CD8-positive, alpha-beta memory T cell (primary cell): ENCODE measurements at regions of chr20 and their contacts with region 1.

Region 1: DNA sequence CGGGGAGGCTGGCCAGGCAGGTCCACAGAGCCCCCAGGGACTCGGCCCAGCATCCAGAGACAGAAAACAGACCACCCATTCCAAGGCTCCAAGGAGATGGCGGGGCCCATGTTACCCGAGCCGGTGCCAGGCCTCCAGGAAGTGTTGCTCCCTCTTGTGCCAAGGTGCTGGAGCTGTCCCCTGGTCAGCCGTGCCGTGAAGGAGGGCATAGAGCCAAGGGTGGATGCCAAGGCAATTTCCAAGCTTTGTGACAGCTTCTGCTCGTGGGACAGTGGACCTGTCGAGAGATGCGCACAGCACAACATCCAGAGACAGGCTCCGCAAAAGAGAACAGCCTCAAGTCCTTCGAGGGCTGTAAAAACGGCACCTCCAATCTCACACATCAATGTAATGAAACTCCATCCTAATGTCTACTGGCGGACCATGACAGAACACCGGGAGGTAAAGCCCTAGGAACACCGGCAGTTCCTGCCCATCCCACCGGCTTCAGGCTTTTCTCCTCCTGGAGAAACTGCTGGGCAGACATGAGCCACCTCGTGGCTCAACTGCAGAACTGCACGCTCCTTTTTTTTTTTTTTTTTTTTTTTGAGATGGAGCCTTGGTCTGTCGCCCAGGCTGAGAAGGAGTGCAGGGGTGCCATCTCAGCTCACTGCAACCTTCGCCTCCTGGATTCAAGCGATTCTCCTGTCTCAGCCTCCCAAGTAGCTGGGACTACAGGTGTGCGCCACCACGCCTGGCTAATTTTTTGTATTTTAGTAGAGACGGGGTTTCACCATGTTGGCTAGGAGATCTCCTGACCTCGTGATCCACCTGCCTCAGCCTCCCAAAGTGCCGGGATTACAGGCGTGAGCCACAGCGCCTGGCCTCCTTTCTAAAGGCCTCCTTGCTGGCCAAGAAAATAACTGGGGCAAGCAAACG is 30.9 kb upstream of the AVP start:
- DNase-seq: peak in 2 of 5 donors; percentile 21 to 49
- H3K4me3 ChIP-seq: no peak overlapping the region
- H3K4me3 Mint-ChIP-seq: no peak overlapping the region
- H3K27ac ChIP-seq: no peak overlapping the region
- H3K27ac Mint-ChIP-seq: peak overlapping the region in 1 of 8 donors; percentile 94
- H3K4me1 ChIP-seq: no peaks in the 10 kb centered on the region
- H3K4me1 Mint-ChIP-seq: peaks cover 3 to 13% (median 4%) of the 10 kb centered on the region in 3 donors
- H3K27me3 ChIP-seq: no peaks in the 10 kb centered on the region
- H3K27me3 Mint-ChIP-seq: peaks cover 0 to 1% of the 10 kb centered on the region in 2 donors

Region 2: GRCh38 chr20:3051385-3052019 is 63.9 kb before region 1 on chr20:
- CTCF ChIA-PET with region 1: interaction called, 18 read pairs
- POLR2A ChIA-PET with region 1: no interaction called
- DNase-seq: no peak
- H3K4me3 ChIP-seq: no peak overlapping the region
- H3K4me3 Mint-ChIP-seq: no peak overlapping the region
- H3K27ac ChIP-seq: no peak overlapping the region
- H3K27ac Mint-ChIP-seq: no peak overlapping the region
- H3K4me1 ChIP-seq: peaks cover 11% of the 10 kb centered on the region
- H3K4me1 Mint-ChIP-seq: peaks cover 7 to 21% (median 8%) of the 10 kb centered on the region in 3 donors
- H3K27me3 ChIP-seq: no peaks in the 10 kb centered on the region
- H3K27me3 Mint-ChIP-seq: no peaks in the 10 kb centered on the region